ENCODE measurements at regions of chr2 and their contacts with region 1.

Region 1: GRCh38 chr2:201231781-201232466 is 28.4 kb upstream of the CASP8 start:
- DNase-seq: peak; percentile 54 to 71
- ATAC-seq: peak; percentile 62 to 77
- H3K4me3 ChIP-seq: no peak overlapping the region
- H3K27ac ChIP-seq: no peak overlapping the region
- H3K4me1 ChIP-seq: peaks cover 8 to 14% of the 10 kb centered on the region in 2 donors
- H3K27me3 ChIP-seq: no peaks in the 10 kb centered on the region
- CTCF ChIP-seq: peak; percentile 55 to 74 (median 67)
- POLR2A ChIP-seq: no peak

Region 2: GRCh38 chr2:201182650-201183364 is 49.1 kb before region 1 on chr2 and contains the start of gene CASP10:
- in situ Hi-C with region 1: no loop called
- intact Hi-C with region 1: loop called (anchors 5 kb)
- DNase-seq: no peak
- ATAC-seq: peak in 1 of 2 donors; percentile 31
- H3K4me3 ChIP-seq: peak within 1 kb of the TSS; percentile 31 to 54 (median 36)
- H3K27ac ChIP-seq: peak within 1 kb of the TSS in 3 of 4 donors; percentile 50 to 61 (median 54)
- H3K4me1 ChIP-seq: no peaks in the 10 kb centered on the region
- H3K27me3 ChIP-seq: no peaks in the 10 kb centered on the region
- CTCF ChIP-seq: peak in 2 of 5 experiments; percentile 16 to 27
- POLR2A ChIP-seq: peak in 1 of 2 donors; percentile 26
- total RNA-seq, gene CASP10: 2.4 to 7.3 (median 3.6) TPM

Region 3: DNA sequence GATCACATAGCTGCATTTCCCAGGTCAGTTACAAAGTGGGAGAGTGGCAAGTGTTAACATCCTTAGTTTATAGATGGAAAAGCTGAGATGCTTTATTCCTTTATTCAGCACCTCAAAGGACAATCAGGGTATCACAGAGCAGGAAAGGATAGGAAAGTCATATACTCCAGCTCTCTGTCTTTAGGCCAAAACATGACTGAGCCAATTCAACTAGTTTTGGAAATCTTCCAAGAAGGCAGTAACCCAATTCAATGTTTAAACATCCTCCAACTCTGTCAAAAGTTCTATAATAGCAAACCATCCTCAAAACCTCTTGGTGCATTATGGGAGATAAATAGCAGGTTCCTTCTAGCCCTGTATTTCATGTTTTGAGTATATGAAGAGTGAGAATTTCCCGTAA is 53.6 kb after region 1 on chr2:
- in situ Hi-C with region 1: no loop called
- intact Hi-C with region 1: no loop called
- DNase-seq: no peak
- ATAC-seq: no peak
- H3K4me3 ChIP-seq: no peak overlapping the region
- H3K27ac ChIP-seq: no peak overlapping the region
- H3K4me1 ChIP-seq: no peaks in the 10 kb centered on the region
- H3K27me3 ChIP-seq: no peaks in the 10 kb centered on the region
- CTCF ChIP-seq: no peak
- POLR2A ChIP-seq: no peak

Region 4: GRCh38 chr2:201363857-201364560 is 132.1 kb after region 1 on chr2:
- in situ Hi-C with region 1: loop called in 2 of 4 experiments (anchors 10 to 25 kb)
- intact Hi-C with region 1: no loop called
- DNase-seq: no peak
- ATAC-seq: peak; percentile 39 to 74
- H3K4me3 ChIP-seq: no peak overlapping the region
- H3K27ac ChIP-seq: no peak overlapping the region
- H3K4me1 ChIP-seq: no peaks in the 10 kb centered on the region
- H3K27me3 ChIP-seq: no peaks in the 10 kb centered on the region
- CTCF ChIP-seq: peak in 4 of 5 experiments; percentile 56 to 73 (median 61)
- POLR2A ChIP-seq: no peak

Measured in gastrocnemius medialis (tissue), 4 donors.